GM12878 (cell line): ENCODE measurements at regions of chr6 and their contacts with region 1.

Region 1: GRCh38 chr6:134174672-134175198 is 122.3 kb upstream of the SLC2A12 start:
- DNase-seq: peak; percentile 50
- ATAC-seq: peak; percentile 96
- H3K4me3 ChIP-seq: peak overlapping the region; percentile 82
- H3K27ac ChIP-seq: no peak overlapping the region
- H3K4me1 ChIP-seq: peaks cover 5% of the 10 kb centered on the region
- H3K27me3 ChIP-seq: peaks cover 2 to 9% of the 10 kb centered on the region in 2 experiments
- CTCF ChIP-seq: peak in 1 of 3 experiments; percentile 34; a peak in 3 of 6 replicates
- EP300 ChIP-seq: no peak
- POLR2A ChIP-seq: peak; percentile 99
- RAD21 ChIP-seq: peak; percentile 38; the same call in 1 of the 2 replicates

Region 2: GRCh38 chr6:134373282-134373922 is 198.7 kb after region 1 on chr6:
- CTCF ChIA-PET with region 1: interaction called, 3 read pairs
- POLR2A ChIA-PET with region 1: no interaction called
- RAD21 ChIA-PET with region 1: interaction called, 4 read pairs
- SMC1A ChIA-PET with region 1: interaction called, 3 read pairs
- in situ Hi-C with region 1: no loop called
- intact Hi-C with region 1: loop called (anchors 5 kb)
- DNase-seq: peak; percentile 85
- ATAC-seq: peak; percentile 97
- H3K4me3 ChIP-seq: peak overlapping the region; percentile 15; the same call in 1 of the 2 replicates
- H3K27ac ChIP-seq: peak overlapping the region; percentile 70
- H3K4me1 ChIP-seq: peaks cover 22% of the 10 kb centered on the region
- H3K27me3 ChIP-seq: no peaks in the 10 kb centered on the region
- CTCF ChIP-seq: no peak
- EP300 ChIP-seq: peak; percentile 61 to 82; a peak in 2 of 4 replicates
- POLR2A ChIP-seq: no peak
- RAD21 ChIP-seq: peak; percentile 17; the same call in 1 of the 2 replicates

Region 3: DNA sequence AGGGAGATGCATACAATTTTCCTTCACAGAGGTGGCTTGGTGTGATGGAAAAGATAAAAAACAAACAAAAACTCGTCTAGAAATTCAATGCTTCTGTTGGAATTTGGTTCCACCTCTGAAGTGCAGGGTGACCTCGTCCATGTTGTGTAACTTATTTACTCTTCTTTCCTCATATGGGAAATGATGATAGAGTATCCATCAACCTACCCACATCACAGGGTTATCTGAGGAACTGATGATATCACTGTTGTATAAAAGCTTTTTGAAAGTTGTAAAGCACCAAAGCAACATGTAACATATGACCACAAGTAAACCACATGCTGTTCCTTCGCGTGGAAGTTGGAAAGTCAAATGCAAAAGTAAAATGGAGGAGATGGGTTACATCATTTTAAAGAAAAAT is 355.2 kb after region 1 on chr6:
- CTCF ChIA-PET with region 1: no interaction called
- POLR2A ChIA-PET with region 1: no interaction called
- RAD21 ChIA-PET with region 1: no interaction called
- SMC1A ChIA-PET with region 1: interaction called, 7 read pairs
- in situ Hi-C with region 1: no loop called
- intact Hi-C with region 1: loop called (anchors 10 kb)
- DNase-seq: no peak
- ATAC-seq: no peak
- H3K4me3 ChIP-seq: no peak overlapping the region
- H3K27ac ChIP-seq: no peak overlapping the region
- H3K4me1 ChIP-seq: no peaks in the 10 kb centered on the region
- H3K27me3 ChIP-seq: peaks cover 0 to 2% of the 10 kb centered on the region in 2 experiments; a peak in 1 of 4 replicates
- CTCF ChIP-seq: no peak
- EP300 ChIP-seq: no peak
- POLR2A ChIP-seq: no peak
- RAD21 ChIP-seq: no peak

Region 4: DNA sequence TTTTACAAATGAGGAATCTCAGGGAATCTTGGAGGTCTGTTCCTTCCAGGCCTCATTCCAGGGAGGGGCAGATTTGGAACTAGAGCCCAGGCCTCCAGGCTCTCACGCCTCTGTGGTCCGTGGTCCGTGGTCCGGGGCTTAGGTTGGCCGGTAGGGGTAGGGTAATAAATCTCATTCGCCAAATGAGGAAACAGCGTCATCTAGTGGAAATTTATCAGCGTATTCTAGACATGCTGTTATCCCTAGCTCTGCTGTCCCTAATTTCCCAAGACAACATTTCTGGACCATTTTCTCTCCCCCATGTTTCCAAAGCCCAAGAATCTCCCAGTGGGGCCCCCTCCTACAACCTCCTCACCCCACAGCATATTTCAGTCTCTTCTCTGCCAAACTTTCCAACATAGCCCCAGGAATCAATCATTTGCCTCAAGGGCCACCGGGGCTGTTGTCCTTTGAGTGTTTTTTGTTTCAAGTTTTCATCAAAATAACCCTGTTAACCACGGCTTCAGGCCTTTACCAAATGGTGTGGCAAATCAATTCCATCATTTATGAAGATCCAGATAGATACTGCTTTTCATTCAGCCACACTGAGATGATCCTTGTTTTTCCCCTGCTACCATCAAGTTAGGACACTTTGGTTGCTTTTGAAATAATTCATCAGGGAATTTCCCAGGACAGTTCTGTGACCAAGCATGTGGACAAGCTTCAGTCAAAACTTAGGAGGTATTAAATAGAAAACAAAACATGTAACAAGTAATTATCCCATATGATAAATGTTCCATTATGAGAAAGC is 648.4 kb after region 1 on chr6:
- CTCF ChIA-PET with region 1: interaction called, 17 read pairs
- POLR2A ChIA-PET with region 1: no interaction called
- RAD21 ChIA-PET with region 1: interaction called, 12 read pairs
- SMC1A ChIA-PET with region 1: interaction called, 5 read pairs
- in situ Hi-C with region 1: loop called (anchors 5 kb)
- intact Hi-C with region 1: loop called (anchors 1 kb)
- DNase-seq: peak; percentile 36
- ATAC-seq: peak; percentile 95
- H3K4me3 ChIP-seq: no peak overlapping the region
- H3K27ac ChIP-seq: no peak overlapping the region
- H3K4me1 ChIP-seq: no peaks in the 10 kb centered on the region; the same call in 1 of the 2 replicates
- H3K27me3 ChIP-seq: no peaks in the 10 kb centered on the region
- CTCF ChIP-seq: peak; percentile 78 to 89 (median 80)
- EP300 ChIP-seq: no peak
- POLR2A ChIP-seq: no peak
- RAD21 ChIP-seq: peak; percentile 84